HEK293 (cell line): ENCODE measurements at regions of chr5 and their contacts with region 1.

Region 1: DNA sequence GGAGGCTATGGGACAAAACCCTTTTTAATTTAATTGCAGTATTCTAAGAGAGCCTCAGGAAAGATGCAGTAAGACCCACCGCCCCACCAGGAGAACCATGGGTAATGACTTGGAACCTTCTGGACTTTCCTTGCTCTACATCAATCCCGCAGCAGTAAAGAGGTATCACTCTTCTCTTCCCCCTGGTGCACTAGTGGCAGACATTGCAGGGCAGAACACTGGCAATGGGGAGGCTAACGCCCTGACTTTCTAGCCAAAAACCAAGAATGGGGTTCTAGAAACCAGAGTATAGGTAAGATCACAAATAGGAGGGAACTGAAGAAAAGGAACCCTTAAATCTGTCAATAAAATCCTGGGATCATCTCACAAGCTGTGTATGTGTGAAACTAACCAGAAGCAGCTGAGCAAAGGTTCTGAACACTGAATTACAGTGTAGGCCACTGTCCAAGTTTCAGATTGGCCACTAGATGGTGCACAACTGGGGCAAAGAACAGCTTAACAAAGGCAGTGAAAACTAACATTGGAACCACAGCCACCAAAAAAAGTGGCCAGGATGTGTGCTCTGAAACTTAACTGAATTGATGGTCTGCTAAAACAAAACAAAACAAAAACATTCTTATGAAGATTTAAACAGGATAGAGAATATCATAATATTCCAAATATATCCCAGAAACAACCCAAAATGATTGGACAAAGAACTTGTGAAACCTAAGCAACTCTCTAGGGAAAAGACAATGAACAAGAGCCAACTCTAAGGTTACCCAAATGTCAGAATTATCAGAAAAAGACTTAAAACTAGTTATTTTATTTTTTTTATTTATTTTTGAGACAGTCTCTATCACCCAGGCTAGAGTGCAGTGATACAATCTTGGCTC is 6.6 kb upstream of the FAM151B start:
- H3K4me3 ChIP-seq: no peak overlapping the region
- H3K27ac ChIP-seq: no peak overlapping the region
- H3K4me1 ChIP-seq: no peaks in the 10 kb centered on the region
- CTCF ChIP-seq: no peak

Region 2: GRCh38 chr5:79284846-79285245 is 1196.4 kb before region 1 on chr5:
- CTCF ChIA-PET with region 1: no interaction called
- POLR2A ChIA-PET with region 1: no interaction called
- H3K4me3 ChIP-seq: no peak overlapping the region
- H3K27ac ChIP-seq: no peak overlapping the region
- H3K4me1 ChIP-seq: no peaks in the 10 kb centered on the region
- CTCF ChIP-seq: no peak

Region 3: DNA sequence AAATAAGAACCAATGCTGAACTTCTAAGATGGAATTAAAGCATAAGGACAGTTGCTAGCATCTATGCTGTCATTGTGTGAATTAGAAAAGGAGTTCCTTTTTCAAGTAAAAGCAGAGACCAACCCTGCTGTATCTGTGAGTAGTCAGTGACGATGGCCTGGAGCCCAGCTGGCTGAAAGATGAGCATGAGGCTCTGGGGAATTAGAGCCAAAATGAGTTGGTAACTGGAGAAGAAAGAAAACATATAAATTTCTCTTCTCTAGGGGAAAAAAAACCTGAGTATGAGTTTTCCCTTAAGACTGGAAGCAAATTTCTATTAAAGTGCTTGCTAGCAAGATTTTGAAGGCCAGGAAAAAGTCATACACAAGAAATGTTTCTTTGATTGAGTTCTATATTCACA is 163.0 kb before region 1 on chr5:
- CTCF ChIA-PET with region 1: no interaction called
- POLR2A ChIA-PET with region 1: no interaction called
- H3K4me3 ChIP-seq: no peak overlapping the region
- H3K27ac ChIP-seq: no peak overlapping the region
- H3K4me1 ChIP-seq: no peaks in the 10 kb centered on the region
- CTCF ChIP-seq: no peak

Region 4: GRCh38 chr5:80466669-80467485 is 14.4 kb before region 1 on chr5:
- CTCF ChIA-PET with region 1: interaction called, 12 read pairs
- POLR2A ChIA-PET with region 1: no interaction called
- H3K4me3 ChIP-seq: no peak overlapping the region
- H3K27ac ChIP-seq: no peak overlapping the region
- H3K4me1 ChIP-seq: no peaks in the 10 kb centered on the region
- CTCF ChIP-seq: no peak

Region 5: DNA sequence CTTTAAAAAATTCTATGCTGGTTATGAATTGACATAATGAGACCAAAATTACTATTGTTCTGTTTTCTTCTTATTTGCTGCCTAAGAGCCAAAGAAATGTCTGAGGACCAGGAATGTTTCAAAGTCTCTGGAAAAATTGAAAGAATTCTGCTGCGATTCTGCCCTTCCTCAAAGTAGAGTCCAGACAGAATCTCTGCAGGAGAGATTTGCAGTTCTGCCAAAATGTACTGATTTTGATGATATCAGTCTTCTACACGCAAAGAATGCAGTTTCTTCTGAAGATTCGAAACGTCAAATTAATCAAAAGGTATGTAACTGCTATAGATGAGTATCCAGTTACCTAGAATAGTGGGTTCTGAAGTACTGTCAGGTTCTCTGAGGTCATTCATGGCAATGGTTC is 183.8 kb after region 1 on chr5:
- CTCF ChIA-PET with region 1: interaction called, 11 read pairs
- POLR2A ChIA-PET with region 1: no interaction called
- H3K4me3 ChIP-seq: no peak overlapping the region
- H3K27ac ChIP-seq: no peak overlapping the region
- H3K4me1 ChIP-seq: no peaks in the 10 kb centered on the region
- CTCF ChIP-seq: no peak

Region 6: GRCh38 chr5:80672140-80672736 is 191.0 kb after region 1 on chr5:
- CTCF ChIA-PET with region 1: interaction called, 14 read pairs
- POLR2A ChIA-PET with region 1: no interaction called
- H3K4me3 ChIP-seq: no peak overlapping the region
- H3K27ac ChIP-seq: no peak overlapping the region
- H3K4me1 ChIP-seq: no peaks in the 10 kb centered on the region
- CTCF ChIP-seq: peak; percentile 40; the same call in 1 of the 2 replicates

Region 7: GRCh38 chr5:80754900-80755299 is 273.6 kb after region 1 on chr5:
- CTCF ChIA-PET with region 1: no interaction called
- POLR2A ChIA-PET with region 1: no interaction called
- H3K4me3 ChIP-seq: no peak overlapping the region
- H3K27ac ChIP-seq: no peak overlapping the region
- H3K4me1 ChIP-seq: peaks cover 3% of the 10 kb centered on the region; the same call in 1 of the 2 replicates
- CTCF ChIP-seq: no peak